Activated T-helper 1 cell treated with anti-CD3 and anti-CD28 coated beads, Interleukin-12 subunit alpha, Interleukin-12 subunit beta, Interleukin-2, Interleukin-4 antibody, amounts not matched to agents 30 ng/mL and 10 ng/mL and 1 ng/mL, durations not matched to agents 14 hours and 24 hours and 36 hours (primary cell): ENCODE measurements at regions of chr19 and their contacts with region 1.

Region 1: DNA sequence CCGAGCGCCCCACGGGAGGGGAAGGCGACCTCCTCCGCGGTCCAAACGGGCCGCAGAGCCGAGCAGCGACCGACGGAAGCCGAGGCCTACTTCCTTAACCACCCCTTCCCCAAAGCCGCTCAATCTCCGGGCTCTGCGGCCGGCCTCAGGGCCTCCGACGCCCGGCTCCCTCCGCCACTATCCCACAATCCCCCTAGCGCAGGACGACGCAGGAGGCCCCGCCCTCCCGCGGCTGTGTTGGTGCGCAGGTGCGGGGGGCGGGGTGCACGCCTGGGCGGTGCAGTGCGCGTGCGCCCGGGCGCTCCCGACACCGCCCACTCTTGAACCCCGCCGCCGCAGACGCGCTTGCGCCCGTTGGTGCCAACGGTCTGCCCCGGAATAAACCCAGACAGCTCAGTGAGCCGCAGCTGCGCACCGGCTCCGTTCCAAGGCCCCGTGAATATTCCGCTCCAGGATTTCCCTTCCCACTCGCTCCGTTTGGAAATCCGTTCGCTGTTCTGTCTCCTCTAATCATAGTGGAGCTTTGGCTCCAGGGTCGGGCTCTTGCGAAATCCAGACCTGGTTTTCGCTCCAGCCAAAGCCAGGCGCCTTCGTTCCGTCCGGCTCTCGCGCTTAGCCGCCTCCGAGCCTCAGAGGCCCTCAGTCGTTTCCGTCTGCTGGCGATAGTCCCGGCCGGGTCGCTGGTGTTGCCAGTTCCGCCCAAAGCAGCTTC is at the start of gene PPP6R1:
- DNase-seq: peak; percentile 93
- H3K4me3 Mint-ChIP-seq: peak within 1 kb of the TSS; percentile 96
- H3K27ac Mint-ChIP-seq: peak within 1 kb of the TSS; percentile 98
- H3K4me1 Mint-ChIP-seq: peaks cover 46% of the 10 kb centered on the region
- H3K27me3 Mint-ChIP-seq: no peaks in the 10 kb centered on the region
- total RNA-seq, gene PPP6R1: 200 and 202 TPM in 2 replicates

Region 2: DNA sequence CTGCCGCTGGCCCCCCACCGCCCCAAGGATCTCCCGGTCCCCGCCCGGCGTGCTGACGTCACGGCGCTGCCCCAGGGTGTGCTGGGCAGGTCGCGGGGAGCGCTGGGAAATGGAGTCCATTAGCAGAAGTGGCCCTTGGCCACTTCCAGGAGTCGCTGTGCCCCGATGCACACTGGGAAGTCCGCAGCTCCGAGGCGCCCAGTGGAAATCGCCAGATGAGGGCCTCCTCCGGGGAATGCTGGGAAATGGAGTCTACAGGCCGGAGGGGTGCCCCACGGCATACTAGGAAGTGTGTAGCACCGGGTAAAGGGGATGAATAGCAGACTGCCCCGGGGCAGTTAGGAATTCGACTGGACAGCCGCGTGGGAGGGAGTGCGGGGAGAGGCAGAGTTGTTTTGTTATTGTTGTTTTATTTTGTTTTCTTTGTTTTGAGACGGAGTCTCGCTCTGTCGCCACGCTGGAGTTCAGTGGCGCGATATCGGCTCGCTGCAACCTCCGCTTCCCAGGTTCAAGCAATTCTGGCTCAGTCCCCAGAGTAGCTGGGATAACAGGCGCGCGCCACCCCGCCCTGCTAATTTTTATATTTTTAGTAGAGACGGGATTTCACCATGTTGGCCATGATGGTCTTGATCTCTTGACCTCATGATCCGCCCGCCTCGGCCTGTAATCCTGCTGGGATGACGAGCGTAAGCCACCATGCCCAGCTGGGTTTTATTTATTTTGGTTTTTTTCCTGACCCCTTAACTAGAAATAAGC is 141.2 kb before region 1 on chr19 and contains the start of gene PPP1R12C:
- intact Hi-C with region 1: loop called (anchors 1 kb)
- DNase-seq: peak; percentile 96
- H3K4me3 Mint-ChIP-seq: peak within 1 kb of the TSS; percentile 98
- H3K27ac Mint-ChIP-seq: peak within 1 kb of the TSS; percentile 95
- H3K4me1 Mint-ChIP-seq: peaks cover 28% of the 10 kb centered on the region
- H3K27me3 Mint-ChIP-seq: peaks cover 4% of the 10 kb centered on the region
- total RNA-seq, gene PPP1R12C: 114 and 115 TPM in 2 replicates

Region 3: GRCh38 chr19:55279770-55280643 is 21.0 kb after region 1 on chr19 and contains the start of gene HSPBP1:
- intact Hi-C with region 1: loop called (anchors 1 kb)
- DNase-seq: peak; percentile 95
- H3K4me3 Mint-ChIP-seq: peak within 1 kb of the TSS; percentile 99
- H3K27ac Mint-ChIP-seq: peak within 1 kb of the TSS; percentile 96
- H3K4me1 Mint-ChIP-seq: peaks cover 51% of the 10 kb centered on the region
- H3K27me3 Mint-ChIP-seq: peaks cover 7% of the 10 kb centered on the region
- total RNA-seq, gene HSPBP1: 66.4 and 69.6 TPM in 2 replicates

Region 4: DNA sequence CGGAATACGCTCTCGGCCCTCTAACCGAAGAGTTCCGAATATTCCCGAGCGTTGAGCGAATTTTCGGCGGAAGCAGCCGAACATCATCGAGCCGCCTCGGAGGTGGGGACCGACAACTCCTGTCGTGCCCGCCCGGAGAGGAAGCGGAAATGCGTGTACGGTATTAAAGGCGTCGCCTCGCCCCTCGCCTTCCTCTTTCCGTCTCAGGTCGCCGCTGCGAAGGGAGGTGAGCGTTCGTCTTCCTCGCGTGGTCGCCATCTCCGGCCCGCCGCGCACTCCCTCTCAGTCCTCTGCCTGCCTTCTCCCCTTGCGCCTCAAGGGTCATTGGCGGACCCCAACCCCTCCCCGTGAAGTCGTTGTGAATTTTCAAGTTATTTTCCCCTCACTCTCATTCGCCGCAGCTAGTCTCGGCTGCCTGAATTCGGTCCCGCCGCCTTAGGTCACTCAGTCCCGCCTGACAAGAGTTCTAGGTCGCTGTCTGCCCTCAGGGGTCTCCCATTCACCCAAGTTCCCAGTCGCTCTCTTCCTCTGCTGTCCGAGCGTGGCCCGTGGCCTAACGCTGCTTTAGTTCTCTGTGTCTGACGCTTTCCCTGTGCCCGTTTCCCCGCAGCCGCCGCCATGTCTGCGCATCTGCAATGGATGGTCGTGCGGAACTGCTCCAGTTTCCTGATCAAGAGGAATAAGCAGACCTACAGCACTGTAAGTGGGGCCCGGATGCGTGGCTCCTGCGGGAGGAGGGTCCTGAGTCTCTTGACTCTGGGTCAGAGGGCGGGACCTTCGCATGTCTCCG is 127.0 kb after region 1 on chr19 and contains the start of gene RPL28:
- intact Hi-C with region 1: loop called (anchors 1 kb)
- DNase-seq: peak; percentile 99
- H3K4me3 Mint-ChIP-seq: peak within 1 kb of the TSS; percentile 99
- H3K27ac Mint-ChIP-seq: peak within 1 kb of the TSS; percentile 96
- H3K4me1 Mint-ChIP-seq: peaks cover 43% of the 10 kb centered on the region
- H3K27me3 Mint-ChIP-seq: no peaks in the 10 kb centered on the region
- total RNA-seq, gene RPL28: 1,835 and 1,847 TPM in 2 replicates

Region 5: DNA sequence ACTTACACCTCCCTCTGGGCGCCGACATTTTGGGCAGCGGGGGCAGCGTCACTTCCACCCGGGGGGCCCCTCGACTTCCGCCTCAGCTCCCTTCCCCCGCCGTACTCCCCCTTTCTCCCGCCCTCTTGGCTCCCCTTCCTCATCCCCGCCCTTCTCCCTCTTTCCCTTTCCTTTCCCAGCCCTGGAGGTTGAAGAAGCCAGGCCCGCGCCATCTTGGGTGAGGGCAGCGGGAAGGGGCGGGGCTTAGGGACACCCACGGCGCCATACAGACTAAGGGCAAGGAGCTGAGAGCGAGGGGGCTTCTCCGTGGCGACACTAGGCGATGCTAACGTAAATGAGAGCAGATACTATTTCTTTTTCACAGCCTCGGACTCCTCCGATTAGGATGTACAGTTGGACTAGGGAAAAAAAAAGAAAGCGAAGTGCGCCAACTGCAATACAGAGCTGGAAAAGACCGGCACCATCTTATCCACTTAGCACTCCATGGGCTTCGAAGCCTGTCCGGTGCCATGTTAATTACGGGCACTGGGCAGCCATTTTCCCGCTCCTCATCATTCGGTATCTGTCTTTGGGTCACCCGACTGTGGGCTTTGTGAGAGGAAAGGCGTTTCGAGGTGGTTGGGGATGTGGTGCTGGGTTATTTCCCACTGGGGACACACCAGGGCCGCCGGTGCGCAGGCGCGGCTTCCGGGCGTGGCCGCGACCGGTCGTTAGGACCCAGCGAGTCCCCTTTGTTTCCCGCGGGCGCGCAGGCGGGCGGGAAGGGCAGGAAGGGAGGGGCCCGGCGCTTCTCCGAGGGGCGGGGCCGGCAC is 340.7 kb after region 1 on chr19 and contains the start of gene FIZ1:
- intact Hi-C with region 1: loop called (anchors 1 kb)
- DNase-seq: peak; percentile 95
- H3K4me3 Mint-ChIP-seq: peak within 1 kb of the TSS; percentile 93
- H3K27ac Mint-ChIP-seq: peak within 1 kb of the TSS; percentile 98
- H3K4me1 Mint-ChIP-seq: peaks cover 28% of the 10 kb centered on the region
- H3K27me3 Mint-ChIP-seq: no peaks in the 10 kb centered on the region
- total RNA-seq, gene FIZ1: 24.2 and 24.7 TPM in 2 replicates

Region 6: GRCh38 chr19:55653758-55654539 is 395.0 kb after region 1 on chr19:
- intact Hi-C with region 1: loop called (anchors 1 kb)
- DNase-seq: peak; percentile 99
- H3K4me3 Mint-ChIP-seq: peak overlapping the region; percentile 93
- H3K27ac Mint-ChIP-seq: peak overlapping the region; percentile 99
- H3K4me1 Mint-ChIP-seq: peaks cover 43% of the 10 kb centered on the region
- H3K27me3 Mint-ChIP-seq: no peaks in the 10 kb centered on the region